Esophagus squamous epithelium (tissue), 5 donors: ENCODE measurements at regions of chr19 and their contacts with region 1.

Region 1: GRCh38 chr19:57746580-57747471 is at the start of gene ZNF776:
- DNase-seq: peak; percentile 46
- H3K4me3 ChIP-seq: peak within 1 kb of the TSS; percentile 76 to 100 (median 90)
- H3K27ac ChIP-seq: peak within 1 kb of the TSS; percentile 88 to 92 (median 90)
- H3K4me1 ChIP-seq: peaks cover 0 to 22% (median 4%) of the 10 kb centered on the region in 3 donors
- H3K27me3 ChIP-seq: no peaks in the 10 kb centered on the region
- CTCF ChIP-seq: no peak
- POLR2A ChIP-seq: peak in 1 of 4 donors; percentile 35
- total RNA-seq, gene ZNF776: 7.9 to 11.6 (median 8.7) TPM

Region 2: GRCh38 chr19:57914531-57914930 is 167.7 kb after region 1 on chr19:
- intact Hi-C with region 1: loop called (anchors 10 kb)
- DNase-seq: no peak
- H3K4me3 ChIP-seq: no peak overlapping the region
- H3K27ac ChIP-seq: no peak overlapping the region
- H3K4me1 ChIP-seq: peaks cover 7 to 24% (median 8%) of the 10 kb centered on the region in 3 donors
- H3K27me3 ChIP-seq: no peaks in the 10 kb centered on the region
- CTCF ChIP-seq: no peak
- POLR2A ChIP-seq: no peak